ENCODE measurements at regions of chr7 and their contacts with region 1.

Region 1: GRCh38 chr7:33062782-33063443 is 337 bp upstream of the NT5C3A start:
- DNase-seq: peak; percentile 95
- ATAC-seq: peak; percentile 96
- H3K4me3 Mint-ChIP-seq: peak overlapping the region; percentile 95
- H3K27ac Mint-ChIP-seq: peak overlapping the region; percentile 95
- H3K4me1 Mint-ChIP-seq: peaks cover 24% of the 10 kb centered on the region
- H3K27me3 Mint-ChIP-seq: peaks cover 10% of the 10 kb centered on the region

Region 2: GRCh38 chr7:32905175-32905662 is 157.7 kb before region 1 on chr7:
- POLR2A ChIA-PET with region 1: interaction called, 11 read pairs
- DNase-seq: peak; percentile 67
- ATAC-seq: peak; percentile 93
- H3K4me3 Mint-ChIP-seq: peak overlapping the region; percentile 85
- H3K27ac Mint-ChIP-seq: peak overlapping the region; percentile 96
- H3K4me1 Mint-ChIP-seq: peaks cover 9% of the 10 kb centered on the region
- H3K27me3 Mint-ChIP-seq: no peaks in the 10 kb centered on the region

Region 3: DNA sequence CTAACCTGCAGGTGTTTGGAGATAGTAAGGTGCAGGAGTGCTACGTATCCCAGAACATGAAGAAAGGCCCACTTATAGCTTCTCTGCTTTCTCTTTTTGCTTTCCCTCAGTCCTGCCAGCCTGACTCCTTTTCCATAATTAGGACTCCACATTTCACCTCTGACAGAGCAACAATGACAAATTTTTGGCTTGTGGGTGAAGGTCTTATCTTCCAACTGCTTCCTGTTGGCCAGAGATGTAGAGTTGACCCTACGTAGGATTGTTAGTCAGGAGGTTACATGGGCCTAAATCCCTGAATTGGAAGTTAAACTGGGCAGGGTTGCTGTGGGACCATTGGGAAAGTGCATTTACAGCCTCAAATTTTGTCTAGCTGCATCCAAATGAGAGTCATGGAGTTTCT is 24.9 kb after region 1 on chr7:
- POLR2A ChIA-PET with region 1: no interaction called
- DNase-seq: no peak
- ATAC-seq: no peak
- H3K4me3 Mint-ChIP-seq: no peak overlapping the region
- H3K27ac Mint-ChIP-seq: no peak overlapping the region
- H3K4me1 Mint-ChIP-seq: no peaks in the 10 kb centered on the region
- H3K27me3 Mint-ChIP-seq: peaks cover 3% of the 10 kb centered on the region

Region 4: GRCh38 chr7:33109005-33109757 is 46.3 kb after region 1 on chr7 and contains the start of gene RP9:
- POLR2A ChIA-PET with region 1: interaction called, 21 read pairs
- DNase-seq: peak; percentile 89
- ATAC-seq: peak; percentile 84
- H3K4me3 Mint-ChIP-seq: peak within 1 kb of the TSS; percentile 85
- H3K27ac Mint-ChIP-seq: peak within 1 kb of the TSS; percentile 77
- H3K4me1 Mint-ChIP-seq: peaks cover 19% of the 10 kb centered on the region
- H3K27me3 Mint-ChIP-seq: peaks cover 16% of the 10 kb centered on the region
- total RNA-seq, gene RP9: 12.8 to 13.6 TPM

Measured in activated naive CD8-positive, alpha-beta T cell treated with anti-CD3 and anti-CD28 coated beads, Interleukin-2, amount 10 ng/mL, durations not matched to agents 7 days and 5 days (primary cell).